Posterior cingulate gyrus (tissue), 11 donors: ENCODE measurements at regions of chr7 and their contacts with region 1.

Region 1: DNA sequence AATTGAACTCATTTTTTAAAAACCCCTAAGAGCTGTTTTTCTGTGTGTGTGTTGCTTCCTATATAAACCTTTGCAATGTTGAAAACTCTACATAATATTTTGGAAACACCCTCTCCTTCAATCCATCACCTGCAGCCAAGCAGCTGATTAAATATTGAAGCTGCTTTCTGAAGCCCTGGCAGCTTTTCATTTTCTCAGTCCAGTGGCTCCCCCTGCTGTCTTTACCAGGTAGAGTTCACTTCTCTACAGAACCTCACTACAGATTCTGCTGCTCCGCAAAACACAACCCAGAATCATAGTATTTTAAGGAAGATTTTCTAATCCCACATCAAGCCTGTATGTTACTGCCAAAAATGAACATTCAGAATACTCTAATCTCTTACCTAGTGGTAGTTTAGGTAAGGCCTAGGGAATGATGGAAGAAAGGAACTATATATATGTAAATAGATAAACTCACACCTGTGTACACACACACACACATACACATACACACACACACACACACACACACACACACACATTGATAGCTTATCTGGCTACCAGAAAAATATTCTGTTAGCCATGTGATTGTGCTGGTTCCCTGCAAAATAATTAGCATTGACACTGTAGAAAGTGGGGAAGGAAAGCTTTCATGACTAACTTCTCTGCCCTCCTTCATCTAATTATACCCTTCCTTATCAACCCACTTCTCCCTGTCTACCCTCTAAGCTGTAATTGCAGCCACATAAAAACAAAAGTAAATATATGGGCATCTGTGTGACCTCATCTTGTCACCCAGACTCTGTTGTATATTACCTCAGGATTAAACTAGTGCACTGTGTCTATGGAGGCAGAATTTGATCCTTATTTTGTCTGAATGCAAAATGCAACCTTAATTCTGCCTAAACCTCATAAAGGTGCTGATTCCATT is 229.5 kb upstream of the FZD1 start:
- DNase-seq: peak in 7 of 10 donors; percentile 22 to 86 (median 51)

Region 2: GRCh38 chr7:90708841-90709317 is 325.8 kb before region 1 on chr7:
- intact Hi-C with region 1: loop called (anchors 5 kb)
- DNase-seq: peak in 8 of 10 donors; percentile 17 to 83 (median 30)

Region 3: GRCh38 chr7:90828601-90829000 is 206.1 kb before region 1 on chr7:
- intact Hi-C with region 1: no loop called
- DNase-seq: no peak